ENCODE measurements at regions of chr12 and their contacts with region 1.

Region 1: DNA sequence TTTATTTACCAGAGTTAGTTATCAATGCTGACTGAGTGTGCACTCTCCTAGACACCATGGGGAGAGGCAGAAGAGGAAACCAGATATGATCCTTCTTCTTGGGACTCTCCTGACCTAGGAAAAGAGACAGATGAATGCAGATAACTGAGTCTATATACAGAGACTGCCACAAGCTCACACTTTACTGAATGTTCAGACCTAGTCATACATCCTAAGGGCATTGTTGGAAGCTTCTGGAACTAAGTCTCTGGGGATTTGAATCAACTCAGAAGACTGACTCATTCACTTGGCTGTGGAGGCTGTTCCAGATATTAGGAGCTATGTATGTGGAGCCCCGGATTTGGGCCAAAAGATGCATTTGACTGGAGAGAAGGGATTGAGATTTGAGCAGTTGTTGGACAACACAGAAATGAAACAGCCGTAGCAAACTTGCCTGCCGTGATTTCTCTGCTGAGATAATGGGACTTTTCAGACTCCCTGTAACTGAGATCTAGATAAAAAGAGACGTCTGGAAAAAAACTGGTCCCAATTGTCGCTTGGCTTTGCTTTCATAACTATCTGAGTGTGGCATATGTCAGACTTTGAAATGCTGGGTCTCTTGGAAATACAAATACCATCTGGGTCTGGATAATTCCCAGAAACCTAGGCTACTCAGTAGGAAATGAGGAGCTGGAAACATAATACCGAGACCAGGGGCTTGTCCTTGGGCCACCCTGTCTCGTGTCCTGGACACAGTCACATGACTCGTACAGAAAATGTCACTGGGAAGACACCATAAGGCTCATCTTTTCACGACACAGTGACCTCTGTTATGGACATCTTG is 396.8 kb downstream of the NUAK1 start:
- DNase-seq: peak in 1 of 2 donors; percentile 87
- H3K4me3 ChIP-seq: peak overlapping the region in 1 of 2 donors; percentile 28
- H3K27ac ChIP-seq: peak overlapping the region; percentile 67 to 72
- H3K4me1 ChIP-seq: peaks cover 11 to 51% of the 10 kb centered on the region in 2 donors
- H3K27me3 ChIP-seq: no peaks in the 10 kb centered on the region
- CTCF ChIP-seq: no peak

Region 2: DNA sequence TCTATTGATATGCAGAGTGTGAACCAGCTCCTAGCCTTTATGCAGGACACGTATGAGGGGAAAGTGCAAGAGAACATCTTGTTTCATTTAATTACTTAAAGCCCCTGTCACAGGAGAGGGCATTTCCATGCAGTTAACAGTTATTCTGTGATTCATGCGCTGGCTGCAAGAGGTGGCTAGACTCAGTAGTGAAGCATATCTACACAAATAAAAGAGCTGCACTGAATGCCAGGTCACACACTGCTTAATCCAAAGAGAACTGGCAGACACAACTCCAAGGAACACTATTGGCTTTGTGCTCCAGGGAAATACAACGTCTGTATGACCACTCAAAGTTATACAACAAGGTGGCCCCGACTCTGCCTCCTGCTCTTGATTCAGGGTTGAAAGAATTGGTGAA is 17.3 kb before region 1 on chr12:
- intact Hi-C with region 1: loop called (anchors 2 kb)
- DNase-seq: no peak
- H3K4me3 ChIP-seq: no peak overlapping the region
- H3K27ac ChIP-seq: peak overlapping the region; percentile 51 to 58
- H3K4me1 ChIP-seq: peaks cover 0 to 3% of the 10 kb centered on the region in 2 donors
- H3K27me3 ChIP-seq: no peaks in the 10 kb centered on the region
- CTCF ChIP-seq: peak in 1 of 3 experiments; percentile 14

Region 3: DNA sequence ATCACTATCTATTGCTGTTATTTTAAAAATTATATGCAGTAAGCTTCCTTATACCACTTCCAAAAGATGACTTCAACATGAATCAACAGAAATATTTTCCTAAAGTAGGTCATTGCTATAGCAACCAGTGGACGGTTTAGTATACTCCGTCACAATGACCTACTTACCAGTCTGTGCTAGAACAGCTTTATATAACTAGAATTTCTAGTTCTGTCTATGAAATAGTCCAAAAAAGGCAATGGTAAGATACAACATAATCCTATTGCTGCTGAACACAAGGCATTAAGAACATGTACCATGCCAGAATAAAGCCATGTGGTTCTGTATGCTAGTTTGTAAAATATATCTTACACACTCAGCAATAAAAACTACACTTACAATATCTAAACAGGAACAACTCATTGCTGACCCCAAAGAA is 1285.7 kb after region 1 on chr12:
- intact Hi-C with region 1: no loop called
- DNase-seq: no peak
- H3K4me3 ChIP-seq: no peak overlapping the region
- H3K27ac ChIP-seq: peak overlapping the region; percentile 54 to 74
- H3K4me1 ChIP-seq: peaks cover 0 to 20% of the 10 kb centered on the region in 2 donors
- H3K27me3 ChIP-seq: no peaks in the 10 kb centered on the region
- CTCF ChIP-seq: no peak

Measured in ascending aorta (tissue), 2 donors.